WTC11 (cell line): ENCODE measurements at regions of chr7 and their contacts with region 1.

Region 1: DNA sequence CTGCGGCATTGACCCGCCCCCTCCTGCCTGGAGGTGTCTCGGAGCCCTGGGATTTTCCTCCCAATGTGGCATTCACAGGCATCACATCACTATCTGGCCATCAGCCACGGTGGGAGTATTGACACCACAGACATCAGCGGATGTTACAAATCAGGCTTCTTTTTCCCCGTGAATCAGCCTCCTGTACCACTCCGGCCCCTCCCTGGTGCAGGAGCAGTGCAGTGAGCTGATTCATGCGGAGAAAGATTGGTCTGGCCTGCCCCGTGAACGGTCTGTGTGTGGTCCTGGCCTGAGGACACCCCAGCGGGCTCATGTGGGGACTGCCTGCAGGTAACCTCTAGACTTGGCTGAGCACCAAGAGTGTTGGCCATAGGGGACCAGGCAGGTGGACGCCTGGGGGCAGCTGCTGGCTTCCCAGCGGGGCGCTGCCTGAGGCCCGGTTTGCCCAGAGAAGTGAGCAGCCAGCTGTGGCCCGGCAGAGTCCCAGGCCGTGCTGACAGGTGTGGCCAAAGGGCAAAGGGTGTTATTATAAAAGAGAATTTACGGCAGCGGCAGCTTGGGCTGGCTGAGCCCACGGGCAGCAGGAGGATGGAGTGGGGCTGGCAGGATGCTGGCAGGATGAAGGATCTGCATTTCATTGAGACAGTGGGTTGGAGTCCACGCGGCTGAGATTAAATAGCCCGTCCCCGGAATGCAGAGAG is 32.1 kb upstream of the GNA12 start:
- DNase-seq: no peak
- ATAC-seq: no peak
- H3K4me3 Mint-ChIP-seq: no peak overlapping the region
- H3K27ac Mint-ChIP-seq: no peak overlapping the region
- H3K4me1 Mint-ChIP-seq: peaks cover 45% of the 10 kb centered on the region
- H3K27me3 Mint-ChIP-seq: no peaks in the 10 kb centered on the region
- CTCF ChIP-seq: no peak

Region 2: GRCh38 chr7:2698581-2699288 is 177.4 kb before region 1 on chr7:
- CTCF ChIA-PET with region 1: no interaction called
- POLR2A ChIA-PET with region 1: no interaction called
- DNase-seq: no peak
- ATAC-seq: no peak
- H3K4me3 Mint-ChIP-seq: no peak overlapping the region
- H3K27ac Mint-ChIP-seq: no peak overlapping the region; the same call in 1 of the 2 replicates
- H3K4me1 Mint-ChIP-seq: 0 out of 2 replicates have a peak, but pooled peaks cover 3% of the 10 kb centered on the region
- H3K27me3 Mint-ChIP-seq: no peaks in the 10 kb centered on the region
- CTCF ChIP-seq: no peak

Region 3: GRCh38 chr7:2863461-2864066 is 12.6 kb before region 1 on chr7:
- CTCF ChIA-PET with region 1: interaction called, 19 read pairs
- POLR2A ChIA-PET with region 1: no interaction called
- DNase-seq: peak; percentile 32
- ATAC-seq: peak; percentile 68
- H3K4me3 Mint-ChIP-seq: no peak overlapping the region
- H3K27ac Mint-ChIP-seq: peak overlapping the region; percentile 87
- H3K4me1 Mint-ChIP-seq: peaks cover 24% of the 10 kb centered on the region
- H3K27me3 Mint-ChIP-seq: no peaks in the 10 kb centered on the region
- CTCF ChIP-seq: no peak